AG04450 (cell line): ENCODE measurements at regions of chr18 and their contacts with region 1.

Region 1: DNA sequence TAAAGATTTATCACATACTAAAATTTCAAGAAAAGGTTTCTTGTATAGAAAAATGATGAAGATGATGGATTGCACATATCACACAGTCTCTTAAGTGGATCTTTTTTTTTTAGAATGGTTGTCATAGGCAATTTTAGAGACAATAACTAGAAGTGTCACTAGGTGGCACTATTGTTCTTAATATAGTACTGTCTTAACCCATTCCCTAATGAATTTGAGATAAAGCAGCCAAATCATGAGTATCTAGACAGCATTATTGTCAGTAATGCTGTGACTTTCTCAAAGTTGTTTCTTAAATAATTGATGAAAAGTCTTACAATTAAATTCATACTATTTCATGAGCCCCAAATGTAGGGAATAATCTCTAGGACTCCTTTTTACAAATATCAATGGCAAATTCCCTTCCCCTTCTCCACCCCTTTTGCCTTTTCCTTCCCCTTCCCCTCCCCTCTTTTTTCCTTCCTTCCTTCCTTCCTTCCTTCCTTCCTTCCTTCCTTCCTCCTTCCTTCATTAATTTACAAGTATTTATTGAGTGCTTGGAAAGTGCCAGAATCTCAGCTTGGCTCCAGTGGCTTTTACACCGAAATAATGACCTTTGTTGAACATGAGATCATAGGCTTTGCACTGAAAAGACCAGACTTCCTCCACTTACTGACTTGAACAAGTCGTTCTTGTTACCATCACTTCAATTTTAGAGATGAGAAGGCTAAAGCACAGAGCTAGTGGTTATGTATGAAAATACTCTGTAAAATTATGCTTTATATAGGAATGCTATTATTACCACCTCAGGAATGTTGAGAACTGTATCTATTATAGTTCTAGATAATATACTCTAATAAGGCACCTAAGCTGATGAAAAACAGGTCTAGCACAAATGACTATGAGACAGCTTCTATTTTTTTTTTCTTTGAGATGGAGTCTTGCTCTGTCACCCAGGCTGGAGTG is 19.8 kb downstream of the MYL12B start:
- DNase-seq: no peak
- H3K4me3 ChIP-seq: no peak overlapping the region
- H3K27ac ChIP-seq: no peak overlapping the region
- H3K27me3 ChIP-seq: no peaks in the 10 kb centered on the region
- CTCF ChIP-seq: peak; percentile 51

Region 2: GRCh38 chr18:2971741-2972552 is 309.8 kb before region 1 on chr18:
- CTCF ChIA-PET with region 1: no interaction called
- POLR2A ChIA-PET with region 1: no interaction called
- DNase-seq: no peak
- H3K4me3 ChIP-seq: no peak overlapping the region
- H3K27ac ChIP-seq: no peak overlapping the region
- H3K27me3 ChIP-seq: no peaks in the 10 kb centered on the region
- CTCF ChIP-seq: no peak

Region 3: GRCh38 chr18:3297025-3297984 is 15.6 kb after region 1 on chr18:
- CTCF ChIA-PET with region 1: interaction called, 12 read pairs
- POLR2A ChIA-PET with region 1: no interaction called
- DNase-seq: peak; percentile 66
- H3K4me3 ChIP-seq: peak overlapping the region; percentile 68
- H3K27ac ChIP-seq: no peak overlapping the region
- H3K27me3 ChIP-seq: peaks cover 3% of the 10 kb centered on the region
- CTCF ChIP-seq: peak; percentile 29

Region 4: DNA sequence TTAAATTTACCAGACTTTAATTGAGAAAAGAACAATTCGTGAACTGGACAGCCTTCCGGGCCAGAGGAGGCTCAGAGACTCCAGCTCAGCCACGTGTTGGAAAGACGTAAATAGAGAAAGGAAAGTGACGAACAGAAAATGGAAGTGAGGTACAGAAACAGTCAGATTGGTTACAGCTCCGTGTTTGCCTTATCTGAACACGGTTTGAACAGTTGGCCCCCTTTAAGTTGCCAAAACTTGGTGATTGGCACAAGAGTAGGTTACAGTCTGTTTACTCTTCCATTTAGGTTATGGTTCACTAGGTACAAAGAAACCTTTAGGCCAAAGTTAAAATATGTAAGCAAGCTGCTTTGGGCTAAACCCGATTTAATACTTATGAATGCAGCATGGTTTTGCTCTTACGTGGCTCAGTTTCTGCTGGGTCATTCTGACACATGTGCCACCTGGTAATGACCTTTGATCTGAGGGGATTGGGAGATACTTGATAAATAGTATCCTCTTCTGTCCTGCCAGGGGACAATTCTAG is 103.0 kb after region 1 on chr18:
- CTCF ChIA-PET with region 1: no interaction called
- POLR2A ChIA-PET with region 1: no interaction called
- DNase-seq: no peak
- H3K4me3 ChIP-seq: no peak overlapping the region
- H3K27ac ChIP-seq: no peak overlapping the region
- H3K27me3 ChIP-seq: no peaks in the 10 kb centered on the region
- CTCF ChIP-seq: no peak

Region 5: GRCh38 chr18:3447895-3448837 is 166.4 kb after region 1 on chr18:
- CTCF ChIA-PET with region 1: interaction called, 17 read pairs
- POLR2A ChIA-PET with region 1: no interaction called
- DNase-seq: peak; percentile 88
- H3K4me3 ChIP-seq: peak overlapping the region; percentile 89
- H3K27ac ChIP-seq: peak overlapping the region; percentile 99
- H3K27me3 ChIP-seq: no peaks in the 10 kb centered on the region
- CTCF ChIP-seq: peak; percentile 18; the same call in 1 of the 2 replicates

Region 6: GRCh38 chr18:3454365-3455089 is 172.8 kb after region 1 on chr18:
- CTCF ChIA-PET with region 1: interaction called, 17 read pairs
- POLR2A ChIA-PET with region 1: no interaction called
- DNase-seq: no peak
- H3K4me3 ChIP-seq: peak overlapping the region; percentile 53
- H3K27ac ChIP-seq: peak overlapping the region; percentile 68
- H3K27me3 ChIP-seq: no peaks in the 10 kb centered on the region
- CTCF ChIP-seq: peak; percentile 74

Region 7: DNA sequence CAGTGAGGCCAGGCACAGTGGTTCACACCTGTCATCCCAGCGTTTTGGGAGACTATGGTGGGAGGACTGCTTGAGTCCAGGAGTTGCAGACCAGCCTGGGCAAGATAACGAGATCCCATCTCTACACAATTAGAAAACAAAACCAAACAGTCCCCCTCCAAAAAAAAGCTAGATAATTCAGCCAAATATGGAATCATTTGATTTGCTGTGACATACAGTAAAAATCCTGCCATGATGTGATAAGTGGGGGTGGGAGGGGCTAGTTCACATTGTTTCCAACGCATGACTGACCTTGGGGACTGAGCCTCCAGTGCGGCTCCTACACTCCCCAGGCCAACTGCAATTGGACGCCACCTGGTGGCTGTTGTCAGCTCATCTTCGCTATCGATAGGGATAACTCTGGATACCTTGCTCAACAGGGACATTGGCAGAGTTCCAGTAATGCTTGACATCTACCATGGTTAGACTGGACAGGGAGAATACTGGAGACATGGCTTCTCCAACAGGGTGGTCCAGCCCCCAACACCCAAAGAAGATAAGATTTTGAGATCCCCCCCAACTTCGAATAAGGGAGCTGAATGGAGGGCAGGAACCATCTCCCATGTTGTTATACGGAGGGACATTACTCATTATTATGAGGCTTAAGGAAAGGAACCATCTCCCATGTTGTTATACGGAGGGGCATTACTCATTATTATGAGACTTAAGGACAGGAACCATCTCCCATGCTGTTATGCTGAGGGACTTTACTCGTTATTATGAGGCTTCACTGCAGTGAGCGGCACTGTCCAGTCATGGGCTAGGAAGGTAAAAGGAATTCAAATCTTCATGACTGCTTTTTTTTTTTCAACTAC is 304.2 kb after region 1 on chr18:
- CTCF ChIA-PET with region 1: interaction called, 23 read pairs
- POLR2A ChIA-PET with region 1: no interaction called
- DNase-seq: no peak
- H3K4me3 ChIP-seq: no peak overlapping the region
- H3K27ac ChIP-seq: no peak overlapping the region
- H3K27me3 ChIP-seq: no peaks in the 10 kb centered on the region
- CTCF ChIP-seq: peak; percentile 74

Region 8: GRCh38 chr18:3593904-3594661 is 312.4 kb after region 1 on chr18:
- CTCF ChIA-PET with region 1: interaction called, 23 read pairs
- POLR2A ChIA-PET with region 1: interaction called, 7 read pairs
- DNase-seq: peak; percentile 96
- H3K4me3 ChIP-seq: peak overlapping the region; percentile 76
- H3K27ac ChIP-seq: peak overlapping the region; percentile 100
- H3K27me3 ChIP-seq: no peaks in the 10 kb centered on the region
- CTCF ChIP-seq: peak; percentile 89

Region 9: GRCh38 chr18:3863593-3863992 is 581.9 kb after region 1 on chr18:
- CTCF ChIA-PET with region 1: interaction called, 15 read pairs
- POLR2A ChIA-PET with region 1: no interaction called
- DNase-seq: no peak
- H3K4me3 ChIP-seq: no peak overlapping the region
- H3K27ac ChIP-seq: no peak overlapping the region
- H3K27me3 ChIP-seq: no peaks in the 10 kb centered on the region
- CTCF ChIP-seq: no peak